Naive thymus-derived CD4-positive, alpha-beta T cell (primary cell): ENCODE measurements at regions of chr10 and their contacts with region 1.

Region 1: DNA sequence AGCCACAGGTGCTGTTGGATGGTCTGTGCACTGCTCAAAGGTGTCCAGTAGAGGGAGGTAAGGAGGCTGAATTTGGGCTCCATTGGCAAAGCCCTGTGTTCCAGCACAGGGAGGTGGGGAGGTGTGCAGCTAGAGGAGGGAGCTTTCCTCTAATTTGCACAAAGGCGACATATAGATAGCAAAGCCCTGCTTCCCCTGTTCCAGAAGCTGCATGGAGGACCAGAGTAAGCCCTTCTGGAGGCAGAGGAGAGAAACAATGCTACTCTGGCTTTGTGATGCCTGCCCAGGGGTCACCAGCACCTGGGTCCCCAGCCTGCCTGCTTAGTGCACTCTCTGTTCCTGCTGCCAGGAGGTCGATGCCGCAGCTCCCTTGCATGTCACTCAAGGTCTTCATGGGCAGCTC is 3.4 kb upstream of the ARHGAP22 start:
- DNase-seq: peak in 4 of 9 donors; percentile 2 to 25 (median 12)
- ATAC-seq: peak; percentile 47
- H3K4me3 ChIP-seq: no peak overlapping the region
- H3K4me3 Mint-ChIP-seq: no peak overlapping the region
- H3K27ac ChIP-seq: no peak overlapping the region
- H3K27ac Mint-ChIP-seq: no peak overlapping the region
- H3K4me1 ChIP-seq: no peaks in the 10 kb centered on the region
- H3K4me1 Mint-ChIP-seq: peaks cover 0 to 6% (median 5%) of the 10 kb centered on the region in 7 donors
- H3K27me3 ChIP-seq: no peaks in the 10 kb centered on the region
- H3K27me3 Mint-ChIP-seq: peaks cover 36 to 60% (median 42%) of the 10 kb centered on the region in 5 donors

Region 2: GRCh38 chr10:48363617-48364355 is 244.5 kb before region 1 on chr10:
- CTCF ChIA-PET with region 1: no interaction called
- POLR2A ChIA-PET with region 1: no interaction called
- intact Hi-C with region 1: loop called (anchors 1 to 2 kb)
- DNase-seq: peak in 6 of 9 donors; percentile 7 to 45 (median 37)
- ATAC-seq: peak; percentile 51
- H3K4me3 ChIP-seq: no peak overlapping the region
- H3K4me3 Mint-ChIP-seq: no peak overlapping the region
- H3K27ac ChIP-seq: no peak overlapping the region
- H3K27ac Mint-ChIP-seq: no peak overlapping the region
- H3K4me1 ChIP-seq: no peaks in the 10 kb centered on the region
- H3K4me1 Mint-ChIP-seq: peaks cover 4 to 59% (median 49%) of the 10 kb centered on the region in 7 donors
- H3K27me3 ChIP-seq: no peaks in the 10 kb centered on the region
- H3K27me3 Mint-ChIP-seq: no peaks in the 10 kb centered on the region

Region 3: GRCh38 chr10:48406204-48406603 is 202.1 kb before region 1 on chr10:
- CTCF ChIA-PET with region 1: no interaction called
- POLR2A ChIA-PET with region 1: no interaction called
- intact Hi-C with region 1: no loop called
- DNase-seq: no peak
- ATAC-seq: no peak
- H3K4me3 ChIP-seq: no peak overlapping the region
- H3K4me3 Mint-ChIP-seq: no peak overlapping the region
- H3K27ac ChIP-seq: no peak overlapping the region
- H3K27ac Mint-ChIP-seq: no peak overlapping the region
- H3K4me1 ChIP-seq: no peaks in the 10 kb centered on the region
- H3K4me1 Mint-ChIP-seq: no peaks in the 10 kb centered on the region
- H3K27me3 ChIP-seq: no peaks in the 10 kb centered on the region
- H3K27me3 Mint-ChIP-seq: no peaks in the 10 kb centered on the region

Region 4: GRCh38 chr10:48623607-48624132 is 15.4 kb after region 1 on chr10:
- CTCF ChIA-PET with region 1: no interaction called
- POLR2A ChIA-PET with region 1: no interaction called
- intact Hi-C with region 1: no loop called
- DNase-seq: no peak
- ATAC-seq: peak; percentile 63
- H3K4me3 ChIP-seq: no peak overlapping the region
- H3K4me3 Mint-ChIP-seq: no peak overlapping the region
- H3K27ac ChIP-seq: no peak overlapping the region
- H3K27ac Mint-ChIP-seq: no peak overlapping the region
- H3K4me1 ChIP-seq: no peaks in the 10 kb centered on the region
- H3K4me1 Mint-ChIP-seq: no peaks in the 10 kb centered on the region
- H3K27me3 ChIP-seq: no peaks in the 10 kb centered on the region
- H3K27me3 Mint-ChIP-seq: peaks cover 6 to 24% (median 16%) of the 10 kb centered on the region in 5 donors

Region 5: DNA sequence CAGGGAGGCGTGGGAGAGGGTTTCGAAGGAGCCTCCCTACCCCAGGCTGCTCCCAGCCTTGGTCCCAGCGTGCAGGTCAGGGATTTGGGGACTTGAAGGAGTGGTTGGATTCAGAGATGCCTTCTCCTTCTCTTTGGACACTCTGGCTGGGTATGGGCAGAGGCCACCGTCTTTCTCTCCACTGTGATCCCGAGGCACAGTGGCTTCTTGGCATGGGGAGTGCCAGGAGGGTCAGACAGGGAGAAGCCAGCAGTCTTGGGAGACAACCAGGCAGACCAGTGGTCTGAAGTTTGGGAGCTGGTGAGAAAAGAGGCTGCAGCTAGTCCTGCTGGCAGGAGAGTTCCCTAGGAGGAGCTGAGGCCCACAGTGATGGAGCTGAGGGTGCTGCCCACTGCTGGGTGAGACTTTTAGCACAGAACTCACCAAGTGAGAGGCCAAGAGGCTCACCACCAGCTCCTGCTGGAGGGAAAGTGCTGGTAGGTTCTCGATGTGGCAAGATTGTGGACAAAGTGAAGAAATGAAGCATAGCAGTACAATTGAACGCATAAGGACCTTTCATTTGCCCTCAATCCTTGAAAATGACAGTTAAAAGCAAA is 41.2 kb after region 1 on chr10:
- CTCF ChIA-PET with region 1: no interaction called
- POLR2A ChIA-PET with region 1: no interaction called
- intact Hi-C with region 1: no loop called
- DNase-seq: no peak
- ATAC-seq: no peak
- H3K4me3 ChIP-seq: no peak overlapping the region
- H3K4me3 Mint-ChIP-seq: no peak overlapping the region
- H3K27ac ChIP-seq: no peak overlapping the region
- H3K27ac Mint-ChIP-seq: no peak overlapping the region
- H3K4me1 ChIP-seq: no peaks in the 10 kb centered on the region
- H3K4me1 Mint-ChIP-seq: peaks cover 0 to 2% (median 0%) of the 10 kb centered on the region in 7 donors
- H3K27me3 ChIP-seq: no peaks in the 10 kb centered on the region
- H3K27me3 Mint-ChIP-seq: peaks cover 14 to 45% (median 28%) of the 10 kb centered on the region in 5 donors

Region 6: DNA sequence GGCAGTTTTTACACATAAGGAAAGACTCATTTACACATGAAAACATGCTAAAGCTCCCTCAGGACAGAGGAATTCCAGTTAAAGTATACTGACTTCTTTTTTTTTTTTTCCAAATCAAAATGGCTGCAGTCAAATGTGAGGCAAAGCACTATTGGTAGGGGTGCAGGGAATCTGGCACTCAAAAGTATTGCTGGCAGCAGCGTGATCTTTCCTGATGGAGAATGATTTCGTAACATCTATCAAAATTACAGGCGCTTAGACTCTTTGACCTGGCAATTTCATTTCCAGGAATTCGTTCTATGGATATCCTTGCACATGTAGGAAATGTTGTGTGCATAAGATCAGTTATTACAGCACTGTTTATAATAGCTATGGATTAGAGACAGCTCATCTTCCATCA is 441.4 kb after region 1 on chr10:
- CTCF ChIA-PET with region 1: no interaction called
- POLR2A ChIA-PET with region 1: no interaction called
- intact Hi-C with region 1: no loop called
- DNase-seq: no peak
- ATAC-seq: no peak
- H3K4me3 ChIP-seq: no peak overlapping the region
- H3K4me3 Mint-ChIP-seq: no peak overlapping the region
- H3K27ac ChIP-seq: no peak overlapping the region
- H3K27ac Mint-ChIP-seq: no peak overlapping the region
- H3K4me1 ChIP-seq: no peaks in the 10 kb centered on the region
- H3K4me1 Mint-ChIP-seq: no peaks in the 10 kb centered on the region
- H3K27me3 ChIP-seq: no peaks in the 10 kb centered on the region
- H3K27me3 Mint-ChIP-seq: peaks cover 0 to 22% (median 8%) of the 10 kb centered on the region in 5 donors